ENCODE measurements at regions of chr12 and their contacts with region 1.

Region 1: GRCh38 chr12:102043928-102044327 is 17.9 kb downstream of the WASHC3 start:
- DNase-seq: peak; percentile 72
- ATAC-seq: peak; percentile 99
- H3K4me3 Mint-ChIP-seq: no peak overlapping the region
- H3K27ac Mint-ChIP-seq: peak overlapping the region; percentile 41
- H3K4me1 Mint-ChIP-seq: peaks cover 19% of the 10 kb centered on the region
- H3K27me3 Mint-ChIP-seq: no peaks in the 10 kb centered on the region

Region 2: DNA sequence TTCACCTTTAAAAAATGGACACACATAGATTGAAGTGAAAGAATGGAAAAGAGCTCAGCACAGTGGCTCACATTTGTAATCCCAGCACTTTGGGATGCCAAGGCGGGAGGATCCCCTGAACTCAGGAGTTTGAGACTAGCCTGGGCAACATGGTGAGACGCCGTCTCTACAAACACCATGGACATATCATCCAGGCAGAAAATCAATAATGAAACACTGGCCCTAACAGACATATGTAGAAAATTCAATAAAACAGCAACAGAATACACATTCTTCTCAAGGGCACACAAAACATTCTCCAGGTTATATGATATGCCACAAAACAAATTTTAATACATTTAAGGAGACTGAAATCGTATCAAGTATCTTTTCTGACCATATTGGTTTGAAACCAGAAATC is 10.4 kb after region 1 on chr12:
- CTCF ChIA-PET with region 1: interaction called, 12 read pairs
- POLR2A ChIA-PET with region 1: interaction called, 3 read pairs
- DNase-seq: no peak
- ATAC-seq: no peak
- H3K4me3 Mint-ChIP-seq: no peak overlapping the region
- H3K27ac Mint-ChIP-seq: no peak overlapping the region
- H3K4me1 Mint-ChIP-seq: peaks cover 31% of the 10 kb centered on the region
- H3K27me3 Mint-ChIP-seq: no peaks in the 10 kb centered on the region